ENCODE measurements at regions of chr2 and their contacts with region 1.

Region 1: GRCh38 chr2:42810121-42810970 is 18.0 kb upstream of the HAAO start:
- DNase-seq: peak; percentile 92 to 97
- H3K4me3 ChIP-seq: peak overlapping the region; percentile 71
- H3K27ac ChIP-seq: peak overlapping the region; percentile 82
- H3K4me1 ChIP-seq: peaks cover 9% of the 10 kb centered on the region
- H3K27me3 ChIP-seq: no peaks in the 10 kb centered on the region
- CTCF ChIP-seq: no peak

Region 2: GRCh38 chr2:41853427-41854216 is 956.7 kb before region 1 on chr2:
- CTCF ChIA-PET with region 1: no interaction called
- POLR2A ChIA-PET with region 1: no interaction called
- intact Hi-C with region 1: loop called (anchors 10 kb)
- DNase-seq: peak in 1 of 2 experiments; percentile 47
- H3K4me3 ChIP-seq: no peak overlapping the region
- H3K27ac ChIP-seq: no peak overlapping the region
- H3K4me1 ChIP-seq: peaks cover 4% of the 10 kb centered on the region
- H3K27me3 ChIP-seq: no peaks in the 10 kb centered on the region
- CTCF ChIP-seq: peak; percentile 98

Region 3: GRCh38 chr2:42360890-42361727 is 449.2 kb before region 1 on chr2 and contains the start of gene COX7A2L:
- CTCF ChIA-PET with region 1: no interaction called
- POLR2A ChIA-PET with region 1: interaction called, 4 read pairs
- intact Hi-C with region 1: loop called (anchors 5 kb)
- DNase-seq: peak; percentile 91 to 97
- H3K4me3 ChIP-seq: peak within 1 kb of the TSS; percentile 89
- H3K27ac ChIP-seq: peak within 1 kb of the TSS; percentile 75
- H3K4me1 ChIP-seq: peaks cover 27% of the 10 kb centered on the region
- H3K27me3 ChIP-seq: no peaks in the 10 kb centered on the region
- CTCF ChIP-seq: no peak
- total RNA-seq, gene COX7A2L: 141 and 144 TPM in 2 replicates

Region 4: GRCh38 chr2:43097644-43098408 is 287.5 kb after region 1 on chr2:
- CTCF ChIA-PET with region 1: no interaction called
- POLR2A ChIA-PET with region 1: no interaction called
- intact Hi-C with region 1: no loop called
- DNase-seq: no peak
- H3K4me3 ChIP-seq: no peak overlapping the region
- H3K27ac ChIP-seq: no peak overlapping the region
- H3K4me1 ChIP-seq: no peaks in the 10 kb centered on the region
- H3K27me3 ChIP-seq: no peaks in the 10 kb centered on the region
- CTCF ChIP-seq: no peak

Measured in PC-9 (cell line).